Heart left ventricle (tissue), 16 donors: ENCODE measurements at regions of chr5 and their contacts with region 1.

Region 1: GRCh38 chr5:100903039-100903887 is at the start of gene ST8SIA4:
- DNase-seq: peak; percentile 88 to 93 (median 90)
- ATAC-seq: peak; percentile 74 to 91 (median 89)
- H3K4me3 ChIP-seq: peak within 1 kb of the TSS; percentile 40 to 81 (median 66)
- H3K27ac ChIP-seq: peak within 1 kb of the TSS in 11 of 12 donors; percentile 38 to 97 (median 84)
- H3K4me1 ChIP-seq: peaks cover 0 to 37% (median 3%) of the 10 kb centered on the region in 12 donors
- H3K27me3 ChIP-seq: peaks cover 0 to 5% (median 0%) of the 10 kb centered on the region in 9 donors
- CTCF ChIP-seq: no peak
- POLR2A ChIP-seq: peak in 1 of 2 donors; percentile 74
- total RNA-seq, gene ST8SIA4: 1.6 to 17.7 (median 4.5) TPM

Region 2: DNA sequence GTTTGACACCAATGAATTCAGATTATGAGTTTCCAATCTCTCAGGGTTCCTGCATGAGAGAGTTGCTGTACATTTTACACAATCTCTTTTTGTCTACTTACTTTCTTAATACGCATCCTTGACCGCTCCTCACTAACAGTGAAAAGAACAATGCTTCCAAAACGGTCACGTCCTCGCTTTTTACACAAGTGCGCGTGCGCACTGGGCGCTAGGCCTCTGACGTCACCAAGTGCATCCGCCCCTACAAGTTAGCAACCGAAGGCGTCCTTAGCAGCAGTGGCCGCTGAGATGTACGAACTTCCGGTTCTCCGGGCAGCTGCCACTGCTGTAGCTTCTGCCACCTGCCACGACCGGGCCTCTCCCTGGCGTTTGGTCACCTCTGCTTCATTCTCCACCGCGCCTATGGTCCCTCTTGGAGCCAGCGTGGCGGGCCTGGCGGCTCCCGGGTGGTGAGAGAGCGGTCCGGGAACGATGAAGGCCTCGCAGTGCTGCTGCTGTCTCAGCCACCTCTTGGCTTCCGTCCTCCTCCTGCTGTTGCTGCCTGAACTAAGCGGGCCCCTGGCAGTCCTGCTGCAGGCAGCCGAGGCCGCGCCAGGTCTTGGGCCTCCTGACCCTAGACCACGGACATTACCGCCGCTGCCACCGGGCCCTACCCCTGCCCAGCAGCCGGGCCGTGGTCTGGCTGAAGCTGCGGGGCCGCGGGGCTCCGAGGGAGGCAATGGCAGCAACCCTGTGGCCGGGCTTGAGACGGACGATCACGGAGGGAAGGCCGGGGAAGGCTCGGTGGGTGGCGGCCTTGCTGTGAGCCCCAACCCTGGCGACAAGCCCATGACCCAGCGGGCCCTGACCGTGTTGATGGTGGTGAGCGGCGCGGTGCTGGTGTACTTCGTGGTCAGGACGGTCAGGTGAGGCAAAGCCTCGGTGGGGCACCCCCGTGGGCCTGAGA is 367.9 kb before region 1 on chr5 and contains the start of gene FAM174A:
- intact Hi-C with region 1: loop called in 2 of 10 experiments (anchors 10 kb)
- DNase-seq: peak; percentile 96 to 98 (median 97)
- ATAC-seq: peak; percentile 98 to 99 (median 99)
- H3K4me3 ChIP-seq: peak within 1 kb of the TSS; percentile 56 to 94 (median 76)
- H3K27ac ChIP-seq: peak within 1 kb of the TSS; percentile 62 to 95 (median 90)
- H3K4me1 ChIP-seq: peaks cover 3 to 39% (median 22%) of the 10 kb centered on the region in 12 donors
- H3K27me3 ChIP-seq: no peaks in the 10 kb centered on the region
- CTCF ChIP-seq: peak in 1 of 12 donors; percentile 10
- POLR2A ChIP-seq: peak in 1 of 2 donors; percentile 77
- total RNA-seq, gene FAM174A: 15.9 to 38.6 (median 20.4) TPM

Region 3: GRCh38 chr5:100706776-100707175 is 196.5 kb before region 1 on chr5:
- intact Hi-C with region 1: loop called in 2 of 10 experiments (anchors 10 kb)
- DNase-seq: no peak
- ATAC-seq: peak in 3 of 4 donors; percentile 34 to 66 (median 49)
- H3K4me3 ChIP-seq: no peak overlapping the region
- H3K27ac ChIP-seq: peak overlapping the region in 1 of 12 donors; percentile 61
- H3K4me1 ChIP-seq: peaks cover 0 to 14% (median 0%) of the 10 kb centered on the region in 12 donors
- H3K27me3 ChIP-seq: no peaks in the 10 kb centered on the region
- CTCF ChIP-seq: peak in 7 of 12 donors; percentile 20 to 46 (median 34)
- POLR2A ChIP-seq: no peak

Region 4: GRCh38 chr5:100787648-100788047 is 115.6 kb before region 1 on chr5:
- intact Hi-C with region 1: loop called in 2 of 10 experiments (anchors 5 to 10 kb)
- DNase-seq: no peak
- ATAC-seq: no peak
- H3K4me3 ChIP-seq: no peak overlapping the region
- H3K27ac ChIP-seq: no peak overlapping the region
- H3K4me1 ChIP-seq: peaks cover 0 to 9% (median 2%) of the 10 kb centered on the region in 12 donors
- H3K27me3 ChIP-seq: no peaks in the 10 kb centered on the region
- CTCF ChIP-seq: no peak
- POLR2A ChIP-seq: no peak

Region 5: DNA sequence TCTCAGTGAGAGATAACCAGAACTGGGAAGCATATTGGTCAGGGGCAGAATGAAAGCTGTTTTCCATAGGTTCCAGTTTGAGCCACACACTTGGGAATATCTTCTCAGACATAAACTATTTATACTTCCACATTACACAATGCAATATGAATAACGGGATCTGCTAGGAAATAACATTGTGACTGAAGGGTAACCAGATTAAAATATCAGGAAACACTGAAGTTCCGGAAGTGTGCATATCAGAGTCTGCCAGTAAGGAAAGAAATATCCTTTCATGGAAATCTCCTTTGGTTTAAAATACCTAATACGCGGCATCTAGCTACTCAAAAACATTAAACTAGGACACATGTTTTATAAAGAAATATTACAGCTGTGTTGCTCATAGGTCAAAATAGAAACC is 56.5 kb before region 1 on chr5:
- intact Hi-C with region 1: loop called in 2 of 10 experiments (anchors 5 kb)
- DNase-seq: no peak
- ATAC-seq: peak in 2 of 4 donors; percentile 33 to 70
- H3K4me3 ChIP-seq: peak overlapping the region in 2 of 12 donors; percentile 2 to 9
- H3K27ac ChIP-seq: peak overlapping the region in 11 of 12 donors; percentile 14 to 67 (median 48)
- H3K4me1 ChIP-seq: peaks cover 0 to 38% (median 0%) of the 10 kb centered on the region in 12 donors
- H3K27me3 ChIP-seq: no peaks in the 10 kb centered on the region
- CTCF ChIP-seq: no peak
- POLR2A ChIP-seq: no peak

Region 6: DNA sequence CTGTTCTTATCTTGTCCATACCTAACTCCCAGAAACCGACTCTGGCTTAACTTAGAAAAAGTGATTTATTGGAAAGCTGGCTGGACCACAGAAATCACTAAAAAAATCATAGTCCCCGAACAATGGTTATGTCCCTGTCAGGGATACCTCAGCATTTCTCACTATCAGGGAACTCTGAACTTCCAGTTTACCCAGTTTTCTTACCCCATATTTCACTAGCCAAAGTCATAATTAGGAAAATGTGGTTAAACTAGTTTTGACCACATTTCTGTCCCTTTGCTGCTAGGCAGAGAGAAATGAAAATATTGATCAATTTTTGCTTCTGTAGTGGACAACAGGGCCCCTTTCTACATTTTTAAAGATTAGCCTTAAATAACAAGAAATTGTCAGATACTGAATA is 38.3 kb before region 1 on chr5:
- intact Hi-C with region 1: no loop called
- DNase-seq: no peak
- ATAC-seq: no peak
- H3K4me3 ChIP-seq: no peak overlapping the region
- H3K27ac ChIP-seq: no peak overlapping the region
- H3K4me1 ChIP-seq: no peaks in the 10 kb centered on the region
- H3K27me3 ChIP-seq: no peaks in the 10 kb centered on the region
- CTCF ChIP-seq: no peak
- POLR2A ChIP-seq: no peak

Region 7: DNA sequence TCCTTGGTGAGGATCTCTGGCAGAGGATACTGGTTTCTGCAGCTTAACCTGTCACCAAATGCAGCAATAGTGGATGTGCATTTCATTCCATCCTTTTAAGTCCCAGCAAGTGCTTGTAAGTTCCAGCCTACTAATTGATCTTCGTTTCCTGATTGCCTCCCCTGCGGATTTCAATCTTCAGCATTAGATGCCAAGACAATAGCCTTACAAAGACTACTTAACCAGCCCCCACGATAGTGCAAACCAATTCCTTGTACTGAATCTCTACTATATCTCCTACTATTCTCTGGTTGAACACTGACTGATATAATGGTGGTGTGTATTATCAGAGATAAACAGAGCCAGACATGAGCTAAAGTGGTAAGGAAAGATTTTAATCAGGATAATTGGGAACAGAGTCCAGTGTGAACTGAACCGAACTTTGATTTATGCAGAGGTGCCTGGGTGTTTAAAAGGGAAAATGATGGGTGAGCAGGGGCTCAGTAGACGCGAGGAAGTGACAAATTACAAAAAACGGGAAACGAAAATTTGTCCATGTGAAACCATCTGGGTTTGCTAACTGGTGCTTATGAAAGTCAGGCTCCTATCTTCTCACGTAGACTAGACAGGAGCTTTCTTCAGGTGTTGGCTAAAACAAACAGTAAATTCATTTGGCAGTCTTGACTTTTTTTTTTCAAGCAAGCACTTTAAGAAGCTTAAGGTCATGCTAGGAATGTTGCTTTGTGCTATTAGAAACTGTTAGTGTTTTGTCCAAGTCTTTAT is 106.7 kb after region 1 on chr5:
- intact Hi-C with region 1: loop called in 1 of 10 experiments (anchors 10 kb)
- DNase-seq: no peak
- ATAC-seq: no peak
- H3K4me3 ChIP-seq: no peak overlapping the region
- H3K27ac ChIP-seq: no peak overlapping the region
- H3K4me1 ChIP-seq: no peaks in the 10 kb centered on the region
- H3K27me3 ChIP-seq: no peaks in the 10 kb centered on the region
- CTCF ChIP-seq: no peak
- POLR2A ChIP-seq: no peak